Activated CD4-positive, alpha-beta memory T cell treated with anti-CD3 and anti-CD28 coated beads, Interleukin-2, amount 10 ng/mL, durations not matched to agents 7 days and 5 days (primary cell): ENCODE measurements at regions of chr12 and their contacts with region 1.

Region 1: GRCh38 chr12:56165369-56165768 is 7.2 kb downstream of the MYL6 start:
- DNase-seq: no peak
- H3K4me3 Mint-ChIP-seq: no peak overlapping the region
- H3K27ac Mint-ChIP-seq: no peak overlapping the region
- H3K4me1 Mint-ChIP-seq: peaks cover 35% of the 10 kb centered on the region
- H3K27me3 Mint-ChIP-seq: no peaks in the 10 kb centered on the region

Region 2: DNA sequence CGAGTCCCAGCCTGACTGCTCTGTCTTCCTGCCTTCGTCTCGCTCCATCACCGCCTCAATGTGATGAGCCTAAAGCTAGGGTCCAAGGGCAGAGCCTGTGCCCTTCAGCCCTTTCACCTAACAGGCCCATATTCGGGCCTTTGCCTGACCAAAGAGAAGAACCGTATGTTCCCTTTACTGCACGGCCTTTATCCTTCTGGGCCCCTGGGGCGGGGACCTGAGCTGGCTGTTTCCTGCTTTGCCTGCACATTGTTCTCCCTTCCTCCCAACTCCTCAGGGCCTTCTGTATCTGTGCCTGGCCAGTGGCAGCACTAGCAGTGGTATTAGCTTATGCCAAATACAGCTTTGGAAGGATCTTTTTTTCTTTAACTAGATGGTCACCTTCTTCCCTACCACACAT is 21.5 kb before region 1 on chr12:
- CTCF ChIA-PET with region 1: no interaction called
- POLR2A ChIA-PET with region 1: interaction called, 66 read pairs
- DNase-seq: no peak
- H3K4me3 Mint-ChIP-seq: no peak overlapping the region
- H3K27ac Mint-ChIP-seq: peak overlapping the region; percentile 70
- H3K4me1 Mint-ChIP-seq: peaks cover 47% of the 10 kb centered on the region
- H3K27me3 Mint-ChIP-seq: no peaks in the 10 kb centered on the region